GM18951 (cell line): ENCODE measurements at regions of chr19 and their contacts with region 1.

Region 1: DNA sequence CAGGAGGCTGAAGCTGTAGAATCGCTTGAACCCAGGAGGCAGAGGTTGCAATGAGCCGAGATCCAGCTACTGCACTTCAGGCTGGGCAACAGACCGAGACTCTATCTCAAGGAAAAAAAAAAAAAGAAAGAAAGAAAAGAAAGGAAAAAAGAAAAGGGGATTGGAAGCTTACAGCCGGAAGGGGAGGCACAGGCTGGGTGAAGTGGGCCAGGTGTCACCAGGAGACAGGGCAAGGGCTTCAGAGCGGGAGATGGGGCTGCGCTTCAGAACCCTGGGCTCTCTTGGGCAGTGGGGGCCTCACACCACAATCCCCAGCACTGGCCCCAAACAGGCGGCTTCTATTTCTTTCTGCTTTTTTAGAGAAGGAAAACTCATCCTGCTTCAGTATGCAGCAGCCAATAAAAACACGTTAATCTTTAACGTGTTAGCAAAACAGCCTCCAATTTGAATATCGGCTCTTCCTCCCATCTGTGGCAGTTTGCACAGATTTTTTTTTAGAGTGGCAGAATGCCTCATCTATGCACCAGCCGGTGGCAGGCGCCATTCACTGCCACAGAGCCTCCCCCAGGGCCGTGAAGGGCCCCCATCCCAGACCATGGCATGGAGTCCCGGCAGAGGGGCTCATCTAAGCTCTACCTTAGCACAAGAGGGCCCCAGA is 46.6 kb upstream of the C19orf12 start:
- POLR2A ChIP-seq: no peak

Region 2: DNA sequence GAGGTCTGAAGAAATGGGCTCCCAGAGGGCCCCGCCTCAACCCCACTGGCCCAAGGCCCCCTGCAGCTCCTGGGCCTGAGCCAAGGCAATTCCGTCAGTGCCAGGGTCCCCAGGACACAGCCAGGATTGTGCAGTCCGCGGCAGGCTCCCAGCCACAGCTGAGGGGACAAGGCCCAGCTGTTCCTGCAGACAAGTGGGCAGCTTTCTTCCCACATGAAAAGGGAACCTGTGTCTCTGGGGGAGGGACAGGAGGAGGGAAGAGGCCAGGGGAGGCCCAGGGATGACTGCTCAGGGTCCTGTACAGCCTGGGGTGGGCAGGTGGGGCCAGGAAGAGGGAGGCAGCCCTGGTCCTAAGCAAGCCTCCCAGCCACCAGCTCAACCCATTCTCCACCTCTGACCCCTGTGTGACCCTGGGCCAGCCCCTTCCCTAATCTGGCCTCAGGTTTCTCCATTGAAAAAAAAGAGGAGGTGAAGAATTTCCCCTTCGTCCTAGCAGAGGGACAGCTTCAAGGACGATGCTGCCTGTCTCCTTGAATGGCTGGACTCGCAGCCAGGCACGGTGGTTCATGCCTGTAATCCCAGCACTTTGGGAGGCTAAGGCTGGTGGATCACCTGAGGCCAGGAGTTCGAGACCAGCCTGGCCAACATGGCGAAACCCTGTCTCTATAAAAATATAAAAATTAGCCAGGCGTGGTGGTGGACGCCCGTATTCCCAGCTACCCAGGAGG is 256.4 kb before region 1 on chr19:
- in situ Hi-C with region 1: no loop called
- POLR2A ChIP-seq: no peak

Region 3: GRCh38 chr19:29873024-29873800 is 111.5 kb after region 1 on chr19:
- in situ Hi-C with region 1: loop called (anchors 10 kb)
- POLR2A ChIP-seq: no peak